Ovary (tissue), 10 donors: ENCODE measurements at regions of chr2 and their contacts with region 1.

Region 1: DNA sequence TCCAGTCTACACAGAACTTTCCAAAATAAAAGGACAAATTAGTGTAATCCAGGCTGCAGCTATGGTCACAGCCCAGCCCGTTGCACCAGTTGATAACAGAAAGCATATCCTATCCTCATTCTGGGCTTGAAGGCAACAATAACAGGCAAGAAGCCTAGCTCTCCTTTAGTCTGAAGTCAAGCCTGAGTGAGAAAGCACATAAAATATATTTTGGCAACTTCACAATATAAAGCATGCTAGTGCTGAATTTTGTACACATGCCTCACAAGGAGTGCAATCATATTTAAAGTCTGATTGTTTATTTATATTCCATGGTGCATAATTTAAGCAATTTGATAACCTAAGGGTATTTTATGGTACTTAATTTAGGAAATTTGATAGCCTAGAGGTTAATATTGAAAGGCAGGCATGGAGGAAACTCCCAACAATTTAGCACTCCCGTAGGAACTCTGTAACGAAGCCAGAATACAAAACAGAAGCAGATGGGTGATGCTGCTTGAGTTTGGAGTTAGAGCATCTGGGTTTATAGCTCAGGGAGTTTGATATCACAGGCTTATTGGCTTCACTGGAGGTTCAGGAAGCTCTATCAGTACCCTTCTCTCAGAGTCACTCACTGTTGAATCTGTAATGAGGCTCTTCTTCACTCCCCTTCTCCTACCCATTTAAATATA is 1199.1 kb upstream of the GYPC start:
- DNase-seq: no peak
- H3K4me3 ChIP-seq: no peak overlapping the region
- H3K27ac ChIP-seq: no peak overlapping the region
- H3K4me1 ChIP-seq: no peaks in the 10 kb centered on the region
- H3K27me3 ChIP-seq: no peaks in the 10 kb centered on the region
- CTCF ChIP-seq: no peak
- EP300 ChIP-seq: no peak
- POLR2A ChIP-seq: no peak

Region 2: DNA sequence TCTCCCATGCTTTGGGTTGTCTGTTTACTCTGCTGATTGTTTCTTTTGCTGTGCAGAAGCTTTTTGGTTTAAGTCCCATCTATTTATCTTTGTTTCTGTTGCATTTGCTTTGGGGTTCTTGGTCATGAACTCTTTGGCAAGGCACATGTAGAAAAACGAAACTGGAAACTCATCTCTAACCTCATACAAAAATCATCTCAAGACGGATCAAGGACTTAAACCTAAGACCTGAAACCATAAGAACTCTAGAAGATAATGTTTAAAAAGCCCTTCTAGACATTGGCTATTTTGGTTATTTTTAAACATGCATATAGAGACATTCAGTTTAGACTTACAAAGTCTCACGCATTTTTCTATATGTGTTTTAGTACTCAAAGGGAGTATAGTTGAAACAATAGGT is 34.8 kb after region 1 on chr2:
- intact Hi-C with region 1: loop called in 1 of 4 experiments (anchors 2 kb)
- DNase-seq: no peak
- H3K4me3 ChIP-seq: no peak overlapping the region
- H3K27ac ChIP-seq: no peak overlapping the region
- H3K4me1 ChIP-seq: no peaks in the 10 kb centered on the region
- H3K27me3 ChIP-seq: no peaks in the 10 kb centered on the region
- CTCF ChIP-seq: no peak
- EP300 ChIP-seq: no peak
- POLR2A ChIP-seq: no peak